Natural killer cell (primary cell): ENCODE measurements at regions of chr17 and their contacts with region 1.

Region 1: GRCh38 chr17:35879773-35880654 is at the start of gene CCL5:
- DNase-seq: peak; percentile 75 to 85
- ATAC-seq: peak; percentile 80 to 91 (median 89)
- H3K4me3 ChIP-seq: peak within 1 kb of the TSS; percentile 65
- H3K4me3 Mint-ChIP-seq: peak within 1 kb of the TSS; percentile 91
- H3K27ac ChIP-seq: peak within 1 kb of the TSS; percentile 96
- H3K27ac Mint-ChIP-seq: peak within 1 kb of the TSS; percentile 93 to 99
- H3K4me1 ChIP-seq: peaks cover 42% of the 10 kb centered on the region
- H3K4me1 Mint-ChIP-seq: peaks cover 53 to 64% of the 10 kb centered on the region in 2 donors
- H3K27me3 ChIP-seq: no peaks in the 10 kb centered on the region
- H3K27me3 Mint-ChIP-seq: no peaks in the 10 kb centered on the region
- CTCF ChIP-seq: no peak
- total RNA-seq, gene CCL5: 793 to 1,167 (median 825) TPM

Region 2: DNA sequence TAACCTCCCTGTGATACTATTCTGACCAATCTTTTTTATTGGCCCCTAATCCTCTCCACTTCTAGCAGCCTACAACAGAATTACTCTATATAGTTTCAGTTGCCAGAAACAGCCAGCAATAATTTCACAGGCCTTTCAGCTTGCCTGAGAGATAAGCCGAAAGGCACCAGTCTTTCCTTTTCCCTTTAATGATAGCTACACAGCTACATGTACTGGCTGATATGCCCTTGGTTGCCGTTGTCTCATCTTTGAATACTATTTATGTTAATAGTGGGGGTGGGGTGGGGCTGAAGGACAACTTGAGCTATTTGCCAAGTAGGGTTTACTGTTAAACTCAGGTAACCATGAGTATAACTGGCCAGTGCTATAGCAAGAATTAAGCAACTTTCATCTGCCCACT is 184.4 kb before region 1 on chr17:
- intact Hi-C with region 1: no loop called
- DNase-seq: no peak
- ATAC-seq: no peak
- H3K4me3 ChIP-seq: no peak overlapping the region
- H3K4me3 Mint-ChIP-seq: no peak overlapping the region
- H3K27ac ChIP-seq: no peak overlapping the region
- H3K27ac Mint-ChIP-seq: no peak overlapping the region
- H3K4me1 ChIP-seq: no peaks in the 10 kb centered on the region
- H3K4me1 Mint-ChIP-seq: peaks cover 0 to 4% of the 10 kb centered on the region in 2 donors
- H3K27me3 ChIP-seq: no peaks in the 10 kb centered on the region
- H3K27me3 Mint-ChIP-seq: no peaks in the 10 kb centered on the region
- CTCF ChIP-seq: no peak

Region 3: DNA sequence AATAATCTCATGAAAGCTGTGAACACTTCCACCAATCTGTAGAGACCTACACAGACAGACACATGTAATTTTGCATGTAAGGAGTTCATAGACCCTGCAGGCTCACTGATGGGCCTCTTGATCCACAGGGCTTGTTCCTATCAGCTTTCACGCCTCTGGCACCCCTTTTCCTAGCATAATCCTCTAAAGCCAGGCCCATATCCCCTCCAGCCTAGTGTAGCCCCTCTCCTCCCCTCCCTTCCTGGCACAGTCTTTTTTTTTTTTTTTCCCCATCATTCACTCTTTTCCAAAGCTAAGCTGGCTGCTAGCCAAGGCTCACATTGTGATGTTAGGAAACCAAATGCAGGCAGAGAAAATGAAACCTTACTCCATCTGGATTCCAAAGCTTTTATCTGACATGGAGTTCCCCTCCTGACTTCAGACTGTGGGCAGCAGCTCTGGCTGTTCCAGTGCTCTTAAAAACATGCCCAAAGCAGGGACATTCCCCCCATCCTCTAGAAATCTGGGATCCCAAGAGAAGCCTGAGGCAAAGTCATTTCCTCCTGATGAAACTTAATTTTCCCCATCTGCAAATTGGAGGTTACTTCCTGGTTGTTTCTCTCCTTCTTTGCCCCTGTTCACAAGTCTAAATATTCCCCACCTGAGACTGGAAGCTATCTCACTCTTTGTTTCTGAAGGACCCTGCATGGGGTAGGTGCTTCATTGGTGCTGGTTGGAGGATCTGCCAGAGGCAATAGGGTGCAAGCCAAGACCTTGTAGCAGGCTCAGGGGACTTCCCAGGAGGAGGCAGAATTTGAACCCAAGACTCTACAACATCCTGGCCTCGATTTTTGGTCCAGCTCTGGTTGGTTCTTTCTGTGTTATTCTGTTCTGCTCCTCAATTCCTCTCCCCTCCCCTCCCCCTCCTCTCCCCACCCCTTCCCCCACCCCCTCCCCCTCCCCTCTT is 10.1 kb after region 1 on chr17:
- intact Hi-C with region 1: loop called (anchors 1 kb)
- DNase-seq: peak in 1 of 2 donors; percentile 62
- ATAC-seq: peak; percentile 21 to 51 (median 32)
- H3K4me3 ChIP-seq: no peak overlapping the region
- H3K4me3 Mint-ChIP-seq: peak overlapping the region; percentile 80
- H3K27ac ChIP-seq: peak overlapping the region; percentile 76
- H3K27ac Mint-ChIP-seq: peak overlapping the region; percentile 97 to 98
- H3K4me1 ChIP-seq: peaks cover 79% of the 10 kb centered on the region
- H3K4me1 Mint-ChIP-seq: peaks cover 67 to 82% of the 10 kb centered on the region in 2 donors
- H3K27me3 ChIP-seq: no peaks in the 10 kb centered on the region
- H3K27me3 Mint-ChIP-seq: no peaks in the 10 kb centered on the region
- CTCF ChIP-seq: no peak

Region 4: GRCh38 chr17:35898283-35899070 is 18.5 kb after region 1 on chr17:
- intact Hi-C with region 1: loop called (anchors 1 kb)
- DNase-seq: peak in 1 of 2 donors; percentile 45
- ATAC-seq: peak; percentile 2 to 49 (median 25)
- H3K4me3 ChIP-seq: no peak overlapping the region
- H3K4me3 Mint-ChIP-seq: peak overlapping the region; percentile 82
- H3K27ac ChIP-seq: peak overlapping the region; percentile 76
- H3K27ac Mint-ChIP-seq: peak overlapping the region; percentile 96 to 97
- H3K4me1 ChIP-seq: peaks cover 98% of the 10 kb centered on the region
- H3K4me1 Mint-ChIP-seq: peaks cover 84 to 91% of the 10 kb centered on the region in 2 donors
- H3K27me3 ChIP-seq: no peaks in the 10 kb centered on the region
- H3K27me3 Mint-ChIP-seq: no peaks in the 10 kb centered on the region
- CTCF ChIP-seq: no peak

Region 5: DNA sequence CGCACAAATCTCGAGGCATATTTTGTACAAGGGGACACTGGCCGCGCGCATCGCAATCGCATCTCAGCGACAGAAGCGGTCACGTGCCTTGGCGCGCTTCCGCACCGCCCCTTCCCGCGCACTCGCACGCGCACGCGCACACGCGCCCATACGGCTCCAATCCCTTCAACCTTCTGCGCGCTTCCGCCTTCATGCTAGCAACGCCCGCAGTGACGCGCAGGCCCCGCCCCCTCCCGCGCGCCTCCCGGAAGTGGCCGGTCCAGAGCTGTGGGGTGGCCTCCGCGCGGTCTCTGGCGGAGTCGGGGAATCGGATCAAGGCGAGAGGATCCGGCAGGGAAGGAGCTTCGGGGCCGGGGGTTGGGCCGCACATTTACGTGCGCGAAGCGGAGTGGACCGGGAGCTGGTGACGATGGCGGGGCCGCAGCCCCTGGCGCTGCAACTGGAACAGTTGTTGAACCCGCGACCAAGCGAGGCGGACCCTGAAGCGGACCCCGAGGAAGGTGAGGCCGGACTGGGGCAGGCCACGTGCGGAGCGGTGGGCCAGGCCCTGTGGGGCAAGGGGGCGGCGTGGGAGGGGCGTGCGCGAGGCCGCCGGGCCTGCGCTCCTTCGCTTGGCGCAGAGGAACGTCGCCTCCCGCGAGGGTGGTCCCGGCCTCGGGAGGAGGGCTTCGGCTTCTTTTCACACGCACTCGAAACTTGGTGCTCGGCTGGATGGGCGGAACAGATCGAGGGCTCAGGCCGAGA is 1068.9 kb after region 1 on chr17 and contains the start of gene AATF:
- intact Hi-C with region 1: loop called (anchors 10 kb)
- DNase-seq: peak; percentile 99
- ATAC-seq: peak; percentile 96 to 98 (median 97)
- H3K4me3 ChIP-seq: peak within 1 kb of the TSS; percentile 93
- H3K4me3 Mint-ChIP-seq: peak within 1 kb of the TSS; percentile 100
- H3K27ac ChIP-seq: peak within 1 kb of the TSS; percentile 88
- H3K27ac Mint-ChIP-seq: peak within 1 kb of the TSS; percentile 95 to 96
- H3K4me1 ChIP-seq: peaks cover 21% of the 10 kb centered on the region
- H3K4me1 Mint-ChIP-seq: peaks cover 53% of the 10 kb centered on the region in 2 donors
- H3K27me3 ChIP-seq: peaks cover 38% of the 10 kb centered on the region
- H3K27me3 Mint-ChIP-seq: peaks cover 28 to 32% of the 10 kb centered on the region in 2 donors
- CTCF ChIP-seq: no peak
- total RNA-seq, gene AATF: 60.1 to 67.2 (median 63.2) TPM